ENCODE measurements at regions of chr19 and their contacts with region 1.

Region 1: DNA sequence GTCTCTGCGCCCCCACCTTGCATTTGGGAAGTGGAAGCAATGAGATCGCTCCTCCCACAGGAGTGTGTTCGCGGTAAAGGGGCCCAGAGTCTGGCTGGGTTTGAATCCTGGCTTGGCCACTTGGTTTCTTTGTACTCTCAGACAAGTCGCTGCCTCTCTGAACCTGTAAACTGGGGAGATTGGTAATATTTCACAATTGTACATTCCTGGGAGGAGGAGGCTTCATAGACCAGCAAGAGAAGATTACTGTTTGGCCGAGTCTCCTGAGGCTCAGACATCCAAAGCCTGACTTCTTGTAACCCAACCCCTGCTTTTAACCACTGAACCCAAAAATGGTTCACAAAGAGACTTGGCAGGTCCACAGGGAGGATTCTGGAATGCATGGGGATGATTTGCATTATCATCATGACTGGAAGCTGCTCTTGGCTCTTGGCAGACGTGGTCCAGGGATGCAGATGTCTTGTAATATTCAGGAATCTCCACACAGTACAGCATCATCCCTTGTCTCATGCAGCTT is 13.6 kb upstream of the STRN4 start:
- DNase-seq: no peak

Region 2: DNA sequence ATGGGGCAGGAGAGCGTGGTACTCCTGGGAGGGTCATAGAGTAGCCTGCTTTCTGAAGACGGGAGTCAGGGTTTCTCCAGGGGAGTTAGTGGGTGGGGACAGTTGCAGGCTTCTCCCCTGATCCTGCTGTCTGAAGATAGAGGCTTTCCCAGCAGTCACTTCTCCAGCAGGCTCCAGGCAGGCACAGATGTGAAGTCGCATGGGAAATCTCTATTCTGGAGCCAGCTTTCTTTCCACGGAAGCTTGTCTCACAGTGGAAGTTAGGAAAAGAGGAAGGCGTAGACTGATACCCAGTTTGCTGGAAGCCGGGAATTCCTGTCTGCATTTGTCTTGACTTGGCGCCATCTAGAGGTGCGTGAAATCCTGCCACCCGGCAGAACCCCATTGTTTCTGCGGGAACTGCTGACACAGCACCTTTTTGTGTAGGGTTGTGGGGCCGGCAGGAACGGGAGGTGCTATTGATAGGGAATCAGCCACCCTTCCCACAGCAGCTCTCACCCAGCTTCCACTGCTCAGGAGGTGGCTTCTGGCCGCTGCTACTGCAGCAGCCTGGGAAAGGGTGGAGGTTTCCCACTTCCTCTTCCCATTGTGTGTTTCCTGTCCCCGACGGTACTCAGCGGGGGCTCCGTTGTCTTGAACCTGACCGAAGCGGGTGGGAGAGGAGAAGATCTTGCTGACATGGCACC is 231.3 kb after region 1 on chr19:
- intact Hi-C with region 1: loop called in 1 of 2 experiments (anchors 5 kb)
- DNase-seq: peak; percentile 92

Region 3: DNA sequence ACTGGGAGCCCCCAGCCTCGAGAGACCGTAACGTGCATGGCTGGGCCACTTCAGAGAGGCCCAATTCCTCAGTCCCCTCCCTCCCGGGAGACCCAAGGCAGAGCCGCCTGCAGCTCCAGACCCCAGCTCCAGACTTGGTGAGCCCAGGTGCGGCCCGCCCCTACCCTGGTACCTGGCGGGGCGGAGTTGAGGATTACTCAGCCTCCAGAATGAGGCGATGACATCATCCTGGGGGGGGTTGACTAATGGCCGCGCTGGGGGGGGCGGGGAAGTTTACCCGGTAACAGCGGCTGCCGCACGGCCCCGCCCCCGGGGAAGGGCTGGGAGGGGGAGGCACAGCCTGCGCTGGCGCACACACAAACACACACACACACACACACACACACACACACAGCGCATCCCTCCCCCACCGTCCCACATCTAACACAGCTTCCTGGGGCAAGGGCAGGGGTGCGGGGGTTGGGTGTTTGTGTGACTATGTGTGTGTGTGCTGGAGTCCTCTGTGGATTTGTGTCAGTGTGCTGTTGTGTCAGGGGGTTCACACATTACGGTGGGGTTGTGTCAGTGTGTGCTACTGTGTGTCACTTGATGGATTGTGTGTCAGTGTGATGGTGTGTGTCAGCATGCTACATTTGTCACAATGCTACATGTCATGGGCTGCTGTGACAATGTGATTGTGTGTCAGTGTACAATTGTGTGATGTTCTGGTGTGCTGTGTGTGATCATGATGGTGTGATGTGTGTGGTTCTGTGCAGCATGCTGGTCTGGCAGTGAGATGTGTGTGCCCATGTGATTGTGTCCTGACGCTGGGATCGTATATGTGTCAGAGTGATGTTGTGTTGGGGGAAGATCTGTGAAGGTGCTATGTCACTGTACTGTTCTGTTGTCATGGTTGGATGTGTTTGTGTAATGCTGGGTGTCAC is 481.4 kb after region 1 on chr19:
- intact Hi-C with region 1: no loop called
- DNase-seq: no peak